ENCODE measurements at regions of chr10 and their contacts with region 1.

Region 1: DNA sequence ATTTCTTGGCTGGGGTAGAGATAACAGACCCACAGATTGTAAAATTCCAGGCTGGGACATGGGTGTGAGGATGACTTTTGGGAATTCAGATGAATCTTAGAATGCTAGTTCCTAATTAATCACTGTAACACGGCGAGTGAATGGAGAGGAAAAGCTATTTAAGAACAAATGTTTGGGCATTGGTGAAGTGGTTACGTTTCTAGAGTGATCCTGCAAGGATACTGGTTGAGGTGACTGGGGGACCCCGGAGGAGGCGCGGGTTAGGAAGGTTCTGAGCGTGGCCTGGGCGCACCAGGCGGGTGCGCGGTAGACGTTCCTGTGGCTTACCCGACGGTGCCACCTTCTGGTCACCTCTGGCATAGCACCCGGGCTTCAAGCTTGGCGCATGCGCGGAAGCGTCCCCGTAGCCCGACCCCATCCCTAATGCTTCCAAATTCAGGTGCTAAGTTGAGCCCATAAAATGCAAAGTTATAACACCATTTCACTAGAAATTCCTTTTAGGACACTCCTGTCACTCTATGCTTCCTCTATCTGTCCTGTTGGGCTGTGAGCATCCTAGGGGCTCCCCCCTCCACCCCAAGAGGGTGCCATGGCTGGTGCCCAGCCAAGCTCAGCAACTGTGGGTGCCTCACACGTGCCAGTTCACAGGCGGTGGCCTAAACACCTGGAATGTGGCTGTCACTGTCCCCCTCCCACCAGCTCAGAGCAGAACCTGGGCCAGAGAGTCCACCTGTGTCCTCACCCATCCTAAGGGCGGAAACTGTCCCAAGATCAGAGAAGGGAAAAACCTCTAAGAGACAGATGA is 104.5 kb downstream of the PTPRE start:
- DNase-seq: peak; percentile 85
- H3K4me3 Mint-ChIP-seq: no peak overlapping the region
- H3K27ac Mint-ChIP-seq: no peak overlapping the region
- H3K4me1 Mint-ChIP-seq: peaks cover 8% of the 10 kb centered on the region
- H3K27me3 Mint-ChIP-seq: no peaks in the 10 kb centered on the region

Region 2: DNA sequence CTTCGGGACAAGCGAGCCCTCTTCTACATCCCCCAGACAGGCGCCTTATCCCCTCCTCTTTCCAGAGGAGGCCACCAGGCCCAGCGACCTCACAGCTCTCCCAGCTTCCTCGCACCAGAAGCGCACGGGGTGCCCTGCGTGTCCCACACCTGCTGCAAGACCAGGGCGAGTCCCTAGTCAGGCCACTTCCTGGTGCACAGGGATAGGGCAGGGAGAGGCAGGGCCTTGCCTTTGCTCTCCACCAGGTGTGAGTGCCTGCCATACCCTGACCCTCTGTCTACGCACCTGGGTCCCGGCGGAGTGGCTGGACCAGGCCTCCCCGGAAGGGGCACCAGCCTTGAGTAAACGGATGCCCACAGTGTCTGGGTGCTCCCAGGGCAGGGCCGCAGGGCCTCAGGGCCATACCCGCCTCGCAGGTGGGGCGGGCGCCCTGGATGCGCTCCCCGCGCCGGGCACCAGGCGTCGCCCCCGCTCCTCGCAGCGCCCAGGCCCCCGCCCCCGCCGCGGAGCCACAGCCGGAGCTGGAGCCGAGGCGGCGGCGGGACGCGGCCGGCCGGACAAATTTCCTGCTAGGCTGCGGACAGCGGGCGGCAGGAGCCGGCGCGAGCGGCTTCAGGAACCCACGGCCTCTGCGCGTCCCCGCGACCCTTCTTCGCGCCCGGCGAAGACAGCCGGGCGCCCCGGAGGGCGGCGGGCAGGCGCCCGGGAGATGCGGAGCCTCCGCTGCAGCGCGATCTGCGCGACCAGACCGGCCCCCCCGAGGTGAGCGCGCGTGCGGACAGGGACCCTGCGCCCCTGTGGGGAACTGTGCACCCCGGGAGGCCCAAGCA is 104.6 kb before region 1 on chr10 and contains the start of gene PTPRE:
- CTCF ChIA-PET with region 1: interaction called, 74 read pairs
- POLR2A ChIA-PET with region 1: no interaction called
- DNase-seq: peak; percentile 56
- H3K4me3 Mint-ChIP-seq: no peak within 1 kb of the TSS
- H3K27ac Mint-ChIP-seq: no peak within 1 kb of the TSS
- H3K4me1 Mint-ChIP-seq: no peaks in the 10 kb centered on the region
- H3K27me3 Mint-ChIP-seq: peaks cover 33% of the 10 kb centered on the region
- total RNA-seq, gene PTPRE: 24.1 to 25.6 TPM

Region 3: GRCh38 chr10:127926455-127926854 is 84.9 kb before region 1 on chr10:
- CTCF ChIA-PET with region 1: interaction called, 16 read pairs
- POLR2A ChIA-PET with region 1: no interaction called
- DNase-seq: no peak
- H3K4me3 Mint-ChIP-seq: no peak overlapping the region
- H3K27ac Mint-ChIP-seq: no peak overlapping the region
- H3K4me1 Mint-ChIP-seq: peaks cover 3% of the 10 kb centered on the region
- H3K27me3 Mint-ChIP-seq: no peaks in the 10 kb centered on the region

Measured in activated CD4-positive, alpha-beta T cell treated with anti-CD3 and anti-CD28 coated beads, Interleukin-2, amount 10 ng/mL, durations not matched to agents 7 days and 5 days (primary cell).